Activated CD8-positive, alpha-beta T cell treated with anti-CD3 and anti-CD28 coated beads, Interleukin-2, amount 10 ng/mL, durations not matched to agents 7 days and 5 days (primary cell): ENCODE measurements at regions of chr11 and their contacts with region 1.

Region 1: DNA sequence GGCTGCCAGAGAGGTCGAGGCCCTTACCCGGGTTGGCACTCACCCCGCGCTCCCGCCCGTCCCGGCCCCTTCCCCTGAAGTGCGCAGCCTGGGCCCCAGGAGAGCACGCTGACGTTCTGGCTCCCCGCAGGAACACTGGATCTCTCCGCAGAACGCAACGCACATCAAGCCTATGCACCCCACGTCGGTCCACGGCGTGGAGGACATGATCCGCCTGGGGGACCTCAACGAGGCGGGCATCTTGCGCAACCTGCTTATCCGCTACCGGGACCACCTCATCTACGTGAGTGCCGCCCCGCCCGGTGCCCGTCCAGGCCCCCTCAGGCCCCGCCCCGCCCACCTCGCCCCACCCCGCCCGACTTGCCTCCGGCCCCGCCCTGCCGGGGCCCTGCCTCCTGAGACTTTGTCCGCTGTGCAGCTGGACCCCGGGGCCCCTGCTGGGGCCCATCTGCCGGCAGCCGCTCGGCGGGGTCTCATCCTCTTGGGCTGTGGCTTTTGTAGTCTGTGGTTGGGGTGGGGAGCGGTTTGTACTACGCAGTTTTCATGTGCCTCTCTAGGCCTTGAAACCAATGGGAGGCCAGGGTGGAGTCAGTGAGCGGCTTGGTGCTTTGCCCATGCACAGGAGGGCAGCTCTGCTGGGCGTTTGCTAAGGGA is 19.7 kb downstream of the MYO7A start:
- DNase-seq: peak; percentile 65
- ATAC-seq: peak; percentile 56
- H3K4me3 Mint-ChIP-seq: peak overlapping the region; percentile 26
- H3K27ac Mint-ChIP-seq: no peak overlapping the region
- H3K4me1 Mint-ChIP-seq: peaks cover 43% of the 10 kb centered on the region
- H3K27me3 Mint-ChIP-seq: peaks cover 58% of the 10 kb centered on the region

Region 2: GRCh38 chr11:77121096-77121640 is 26.6 kb before region 1 on chr11:
- CTCF ChIA-PET with region 1: no interaction called
- POLR2A ChIA-PET with region 1: no interaction called
- DNase-seq: no peak
- ATAC-seq: peak; percentile 28
- H3K4me3 Mint-ChIP-seq: no peak overlapping the region
- H3K27ac Mint-ChIP-seq: no peak overlapping the region
- H3K4me1 Mint-ChIP-seq: peaks cover 11% of the 10 kb centered on the region
- H3K27me3 Mint-ChIP-seq: no peaks in the 10 kb centered on the region

Region 3: DNA sequence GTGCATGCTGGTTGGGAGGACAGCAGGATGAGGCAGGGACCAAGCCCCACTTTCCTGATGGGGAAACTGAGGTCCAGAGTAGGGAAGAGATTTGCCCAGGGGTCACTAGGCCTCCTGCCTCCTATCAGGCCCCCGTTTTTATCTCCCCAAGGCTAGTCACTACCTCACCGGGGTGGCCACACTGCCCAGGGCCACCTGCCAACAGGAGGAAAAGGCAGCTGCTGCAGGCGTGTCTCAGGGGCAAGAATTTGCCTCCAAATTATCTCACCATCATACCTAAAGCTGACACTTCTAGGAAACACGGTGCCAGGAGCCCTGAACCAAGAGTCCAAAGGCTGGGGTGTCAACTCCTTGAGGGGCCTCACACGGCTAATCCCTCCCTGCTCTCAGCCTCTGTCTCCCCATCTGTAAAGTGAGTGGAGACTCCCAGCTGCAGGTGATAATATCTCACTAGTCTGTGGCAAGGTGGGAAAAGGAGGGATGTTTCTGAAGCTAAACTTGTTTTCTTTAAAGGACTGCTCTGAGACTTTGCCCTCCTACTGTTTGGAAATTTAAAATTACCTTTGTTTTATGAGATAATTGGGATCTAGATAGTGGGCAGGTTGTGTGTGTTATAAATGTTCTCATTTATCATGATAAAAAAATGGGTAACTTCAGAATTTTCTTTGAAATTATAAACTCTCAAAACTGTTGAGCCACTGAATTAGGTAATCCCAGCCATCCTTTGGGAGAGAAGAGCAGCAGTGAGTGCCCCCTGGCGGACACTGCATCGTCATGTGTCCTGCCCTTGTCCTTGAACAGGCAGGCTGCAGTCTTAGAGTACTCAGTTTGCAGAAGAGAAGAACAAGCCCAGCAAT is 40.2 kb after region 1 on chr11:
- CTCF ChIA-PET with region 1: interaction called, 10 read pairs
- POLR2A ChIA-PET with region 1: no interaction called
- DNase-seq: peak; percentile 83
- ATAC-seq: peak; percentile 83
- H3K4me3 Mint-ChIP-seq: no peak overlapping the region
- H3K27ac Mint-ChIP-seq: no peak overlapping the region
- H3K4me1 Mint-ChIP-seq: no peaks in the 10 kb centered on the region
- H3K27me3 Mint-ChIP-seq: peaks cover 4% of the 10 kb centered on the region